Panc1 (cell line): ENCODE measurements at regions of chr12 and their contacts with region 1.

Region 1: GRCh38 chr12:60148109-60148508 is 552.3 kb downstream of the SLC16A7 start:
- DNase-seq: no peak
- ATAC-seq: no peak
- H3K4me3 ChIP-seq: no peak overlapping the region
- H3K27ac ChIP-seq: no peak overlapping the region
- H3K4me1 ChIP-seq: no peaks in the 10 kb centered on the region
- H3K27me3 ChIP-seq: no peaks in the 10 kb centered on the region
- CTCF ChIP-seq: no peak

Region 2: GRCh38 chr12:60349251-60349978 is 201.3 kb after region 1 on chr12:
- CTCF ChIA-PET with region 1: interaction called, 10 read pairs
- POLR2A ChIA-PET with region 1: no interaction called
- in situ Hi-C with region 1: no loop called
- intact Hi-C with region 1: no loop called
- DNase-seq: no peak
- ATAC-seq: no peak
- H3K4me3 ChIP-seq: no peak overlapping the region
- H3K27ac ChIP-seq: no peak overlapping the region
- H3K4me1 ChIP-seq: no peaks in the 10 kb centered on the region
- H3K27me3 ChIP-seq: no peaks in the 10 kb centered on the region
- CTCF ChIP-seq: no peak